HepG2 (cell line): ENCODE measurements at regions of chr17 and their contacts with region 1.

Region 1: GRCh38 chr17:31433091-31433790 is 41.8 kb downstream of the RAB11FIP4 start:
- DNase-seq: no peak
- ATAC-seq: no peak
- H3K4me3 ChIP-seq: no peak overlapping the region; a peak in 1 of 6 replicates
- H3K27ac ChIP-seq: no peak overlapping the region
- H3K4me1 ChIP-seq: peaks cover 72% of the 10 kb centered on the region
- H3K27me3 ChIP-seq: peaks cover 1 to 9% of the 10 kb centered on the region in 2 experiments; a peak in 1 of 5 replicates
- CTCF ChIP-seq: no peak
- EP300 ChIP-seq: no peak
- POLR2A ChIP-seq: no peak
- RAD21 ChIP-seq: no peak

Region 2: DNA sequence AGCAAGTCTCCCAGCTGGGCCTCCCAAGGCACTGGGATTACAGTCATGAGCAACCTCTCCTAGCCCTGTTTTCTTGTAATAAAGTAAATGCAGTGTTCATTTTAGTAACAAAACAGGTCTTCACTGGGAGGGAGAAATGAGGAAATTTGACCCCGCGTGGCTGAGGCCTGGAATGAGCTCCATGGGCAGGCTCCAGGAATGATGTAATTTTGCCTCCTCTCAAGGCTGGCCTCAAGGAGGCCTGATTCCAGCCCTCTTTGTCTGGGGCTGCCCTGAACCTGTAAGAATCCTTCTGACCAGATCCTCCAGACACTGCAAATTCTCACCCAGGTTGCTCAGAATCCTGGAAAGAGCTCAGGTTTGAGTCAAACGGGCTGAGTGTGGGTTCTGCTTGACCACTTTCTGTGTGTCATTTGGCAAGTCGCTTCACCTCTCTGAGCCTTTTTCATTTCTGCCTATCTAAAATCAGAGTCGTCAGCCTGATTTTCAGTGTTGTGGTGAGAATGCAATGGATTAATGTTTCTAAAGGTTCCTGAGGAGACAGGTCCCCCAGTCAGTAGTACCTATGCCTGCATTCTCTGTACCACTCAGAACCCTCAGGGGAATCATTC is 15.3 kb after region 1 on chr17:
- CTCF ChIA-PET with region 1: no interaction called
- POLR2A ChIA-PET with region 1: no interaction called
- in situ Hi-C with region 1: no loop called
- intact Hi-C with region 1: no loop called
- DNase-seq: no peak
- ATAC-seq: no peak
- H3K4me3 ChIP-seq: no peak overlapping the region
- H3K27ac ChIP-seq: no peak overlapping the region
- H3K4me1 ChIP-seq: peaks cover 22% of the 10 kb centered on the region
- H3K27me3 ChIP-seq: no peaks in the 10 kb centered on the region
- CTCF ChIP-seq: no peak
- EP300 ChIP-seq: no peak
- POLR2A ChIP-seq: no peak
- RAD21 ChIP-seq: no peak

Region 3: DNA sequence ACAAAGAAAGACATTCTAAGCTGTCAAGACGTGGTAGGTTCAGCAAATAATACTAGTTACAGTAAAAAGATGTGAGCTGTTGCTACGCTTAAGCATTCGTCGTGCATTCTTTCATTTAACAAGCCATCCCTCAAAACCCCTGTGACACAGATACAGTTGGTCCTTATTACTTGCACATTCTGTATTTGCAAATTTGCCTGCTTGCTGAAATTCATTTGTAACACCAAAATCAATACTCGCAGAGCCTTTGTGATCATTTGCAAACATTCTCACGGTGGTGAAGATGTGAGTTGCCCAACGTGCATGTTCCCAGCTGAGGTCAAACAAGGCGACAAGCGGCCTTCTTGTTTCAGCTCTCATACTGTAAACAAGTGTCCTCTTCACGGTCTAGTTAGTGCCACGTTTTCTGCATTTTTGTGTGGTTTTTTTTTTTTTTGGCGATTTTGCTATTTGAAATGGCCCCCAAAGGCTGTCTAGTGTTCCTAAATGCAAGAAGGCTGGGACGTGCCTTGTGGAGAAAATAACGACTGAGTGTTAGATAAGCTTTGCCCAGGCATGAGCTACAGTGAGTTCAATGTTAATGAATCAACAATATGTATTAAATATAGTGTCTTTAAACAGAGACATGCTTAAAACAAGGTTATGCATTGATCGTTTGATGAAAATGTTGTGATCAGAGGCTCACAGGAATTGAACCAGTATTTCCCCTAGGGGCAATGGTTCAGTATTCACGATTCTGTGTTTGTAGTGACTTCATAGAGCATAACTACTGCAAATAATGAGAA is 42.3 kb after region 1 on chr17:
- CTCF ChIA-PET with region 1: no interaction called
- POLR2A ChIA-PET with region 1: no interaction called
- in situ Hi-C with region 1: no loop called
- intact Hi-C with region 1: loop called (anchors 5 kb)
- DNase-seq: peak; percentile 96
- ATAC-seq: peak; percentile 74
- H3K4me3 ChIP-seq: peak overlapping the region; percentile 12 to 59 (median 26); a peak in 5 of 6 replicates
- H3K27ac ChIP-seq: peak overlapping the region; percentile 96
- H3K4me1 ChIP-seq: peaks cover 96% of the 10 kb centered on the region
- H3K27me3 ChIP-seq: no peaks in the 10 kb centered on the region; a peak in 1 of 5 replicates
- CTCF ChIP-seq: no peak
- EP300 ChIP-seq: peak; percentile 85 to 96; a peak in 3 of 4 replicates
- POLR2A ChIP-seq: no peak
- RAD21 ChIP-seq: no peak

Region 4: GRCh38 chr17:31487648-31488263 is 54.5 kb after region 1 on chr17:
- CTCF ChIA-PET with region 1: no interaction called
- POLR2A ChIA-PET with region 1: interaction called, 21 read pairs
- in situ Hi-C with region 1: no loop called
- intact Hi-C with region 1: no loop called
- DNase-seq: peak; percentile 86
- ATAC-seq: peak; percentile 90
- H3K4me3 ChIP-seq: peak overlapping the region; percentile 81 to 95 (median 87)
- H3K27ac ChIP-seq: peak overlapping the region; percentile 73
- H3K4me1 ChIP-seq: peaks cover 53% of the 10 kb centered on the region
- H3K27me3 ChIP-seq: no peaks in the 10 kb centered on the region
- CTCF ChIP-seq: peak; percentile 50
- EP300 ChIP-seq: 0 out of 4 replicates have a peak, but pooled peaks of 1 of the 2 experiments have one; percentile 3
- POLR2A ChIP-seq: peak; percentile 91 to 98
- RAD21 ChIP-seq: peak; percentile 68

Region 5: DNA sequence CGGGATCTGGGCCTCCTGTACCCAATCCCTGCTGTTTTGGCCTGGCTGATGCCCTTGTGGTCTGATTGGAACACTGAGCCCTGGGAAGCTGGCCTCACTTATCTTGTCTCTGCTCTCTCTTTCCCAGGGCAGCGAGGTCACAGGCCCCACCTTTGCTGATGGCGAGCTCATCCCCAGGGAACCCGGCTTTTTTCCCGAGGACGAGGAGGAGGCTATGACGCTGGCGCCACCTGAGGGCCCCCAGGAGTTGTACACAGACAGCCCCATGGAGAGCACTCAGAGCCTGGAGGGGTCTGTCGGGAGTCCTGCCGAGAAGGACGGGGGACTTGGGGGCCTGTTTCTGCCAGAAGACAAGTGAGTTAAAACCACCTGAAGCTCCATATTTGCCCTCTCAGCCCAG is 84.3 kb after region 1 on chr17:
- CTCF ChIA-PET with region 1: interaction called, 34 read pairs
- POLR2A ChIA-PET with region 1: no interaction called
- in situ Hi-C with region 1: no loop called
- intact Hi-C with region 1: loop called (anchors 1 kb)
- DNase-seq: peak; percentile 53
- ATAC-seq: peak; percentile 63
- H3K4me3 ChIP-seq: no peak overlapping the region
- H3K27ac ChIP-seq: no peak overlapping the region
- H3K4me1 ChIP-seq: peaks cover 33% of the 10 kb centered on the region
- H3K27me3 ChIP-seq: no peaks in the 10 kb centered on the region
- CTCF ChIP-seq: peak; percentile 76
- EP300 ChIP-seq: no peak
- POLR2A ChIP-seq: no peak
- RAD21 ChIP-seq: peak; percentile 82

Region 6: DNA sequence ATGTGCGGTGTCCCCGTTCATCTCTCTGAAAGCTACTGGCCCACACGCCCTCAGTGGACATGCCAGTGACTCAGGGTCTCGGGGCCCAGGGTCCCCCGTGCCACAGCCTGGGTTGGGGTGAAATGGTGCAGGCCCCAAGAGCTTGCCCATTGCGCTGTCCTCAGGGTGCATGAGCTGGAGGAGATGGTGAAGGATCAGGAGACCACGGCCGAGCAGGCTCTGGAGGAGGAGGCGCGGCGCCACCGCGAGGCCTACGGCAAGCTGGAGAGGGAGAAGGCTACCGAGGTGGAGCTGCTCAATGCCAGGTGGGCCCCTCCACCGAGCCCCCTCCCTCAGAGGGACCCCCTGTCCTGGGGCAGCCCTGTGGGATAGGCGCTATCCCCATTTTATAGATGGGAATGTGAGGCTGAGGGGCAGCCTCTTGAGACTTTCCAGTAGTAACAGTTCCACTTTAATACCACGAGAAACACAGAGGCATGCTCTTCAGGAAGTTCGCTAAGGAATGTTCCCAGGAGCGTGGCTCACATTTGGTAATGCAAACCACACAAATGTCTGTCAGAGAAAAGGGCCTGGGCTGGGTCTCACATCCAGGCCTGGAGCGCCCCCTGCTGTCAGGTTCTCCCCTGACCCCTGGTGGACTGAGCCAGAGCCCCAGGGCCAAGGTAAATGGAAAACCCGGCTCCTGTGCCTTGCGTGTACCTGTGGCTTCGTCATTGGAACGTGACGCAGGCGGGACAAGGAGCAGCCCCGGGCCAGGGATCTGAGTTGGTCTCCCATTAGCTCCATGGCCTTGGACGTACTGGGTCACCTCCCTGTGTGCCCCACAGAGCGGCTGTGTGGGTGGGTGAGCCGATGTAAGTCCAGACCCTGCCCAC is 91.9 kb after region 1 on chr17:
- CTCF ChIA-PET with region 1: interaction called, 63 read pairs
- POLR2A ChIA-PET with region 1: interaction called, 3 read pairs
- in situ Hi-C with region 1: loop called (anchors 5 kb)
- intact Hi-C with region 1: loop called (anchors 2 kb)
- DNase-seq: peak; percentile 61
- ATAC-seq: peak; percentile 85
- H3K4me3 ChIP-seq: no peak overlapping the region
- H3K27ac ChIP-seq: no peak overlapping the region
- H3K4me1 ChIP-seq: peaks cover 13% of the 10 kb centered on the region
- H3K27me3 ChIP-seq: no peaks in the 10 kb centered on the region
- CTCF ChIP-seq: peak; percentile 93
- EP300 ChIP-seq: no peak
- POLR2A ChIP-seq: no peak
- RAD21 ChIP-seq: peak; percentile 97

Region 7: GRCh38 chr17:31842183-31843069 is 409.2 kb after region 1 on chr17:
- CTCF ChIA-PET with region 1: no interaction called
- POLR2A ChIA-PET with region 1: no interaction called
- in situ Hi-C with region 1: loop called (anchors 10 kb)
- intact Hi-C with region 1: loop called (anchors 5 kb)
- DNase-seq: peak; percentile 62
- ATAC-seq: peak; percentile 96
- H3K4me3 ChIP-seq: peak overlapping the region; percentile 23 to 45 (median 25); a peak in 5 of 6 replicates
- H3K27ac ChIP-seq: no peak overlapping the region
- H3K4me1 ChIP-seq: peaks cover 34% of the 10 kb centered on the region
- H3K27me3 ChIP-seq: no peaks in the 10 kb centered on the region
- CTCF ChIP-seq: peak; percentile 95
- EP300 ChIP-seq: no peak
- POLR2A ChIP-seq: no peak
- RAD21 ChIP-seq: peak; percentile 98